BJ (cell line): ENCODE measurements at regions of chr1 and their contacts with region 1.

Region 1: GRCh38 chr1:180252638-180253536 is 22.8 kb downstream of the LHX4 start:
- DNase-seq: no peak
- H3K4me3 ChIP-seq: no peak overlapping the region
- H3K27me3 ChIP-seq: no peaks in the 10 kb centered on the region; the same call in 1 of the 2 replicates
- CTCF ChIP-seq: peak; percentile 88

Region 2: DNA sequence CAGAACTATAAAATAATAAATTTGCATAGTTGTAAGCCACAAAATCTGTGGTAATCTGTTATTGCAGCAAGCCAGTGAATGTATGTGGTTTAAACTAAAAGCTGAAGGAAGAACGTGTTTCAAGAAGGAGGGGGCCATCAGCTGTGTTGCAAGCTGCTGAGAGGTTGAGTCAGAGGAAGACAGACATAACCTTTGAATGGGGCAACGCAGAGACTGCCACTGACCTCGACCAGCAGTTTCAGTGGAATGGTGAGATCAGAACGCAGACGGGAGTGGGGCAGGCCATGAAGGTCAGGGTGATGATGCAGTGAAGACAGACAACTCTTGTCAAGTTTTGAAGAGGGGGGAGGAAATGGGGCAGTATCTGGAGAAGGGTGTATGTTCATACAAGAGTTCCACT is 121.4 kb before region 1 on chr1:
- CTCF ChIA-PET with region 1: no interaction called
- POLR2A ChIA-PET with region 1: no interaction called
- DNase-seq: peak; percentile 52
- H3K4me3 ChIP-seq: no peak overlapping the region
- H3K27me3 ChIP-seq: no peaks in the 10 kb centered on the region
- CTCF ChIP-seq: no peak

Region 3: DNA sequence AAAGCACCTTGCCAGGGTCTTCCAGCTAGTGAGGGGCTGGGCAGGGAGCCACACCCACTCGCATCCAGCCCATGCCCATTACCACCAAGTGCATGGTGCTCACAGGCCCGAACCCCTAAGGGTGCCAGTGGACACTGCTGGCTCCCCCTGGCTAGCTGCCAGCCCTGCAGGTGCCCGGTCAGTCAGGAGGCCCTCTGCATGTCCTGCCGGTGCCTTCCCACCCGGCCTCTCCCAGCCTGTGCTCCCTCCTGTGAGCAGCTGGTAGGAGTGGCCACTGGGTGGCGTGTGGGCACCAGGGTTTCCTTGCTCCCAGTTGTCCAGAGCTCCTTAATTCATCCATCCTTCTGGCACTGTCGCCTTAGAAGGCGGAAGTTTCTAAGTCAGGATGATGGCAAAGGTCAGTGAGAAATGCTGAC is 64.8 kb before region 1 on chr1:
- CTCF ChIA-PET with region 1: interaction called, 11 read pairs
- POLR2A ChIA-PET with region 1: no interaction called
- DNase-seq: no peak
- H3K4me3 ChIP-seq: no peak overlapping the region
- H3K27me3 ChIP-seq: no peaks in the 10 kb centered on the region
- CTCF ChIP-seq: peak; percentile 85

Region 4: GRCh38 chr1:180241716-180242526 is 11.0 kb before region 1 on chr1:
- CTCF ChIA-PET with region 1: interaction called, 10 read pairs
- POLR2A ChIA-PET with region 1: no interaction called
- DNase-seq: no peak
- H3K4me3 ChIP-seq: no peak overlapping the region
- H3K27me3 ChIP-seq: peaks cover 24% of the 10 kb centered on the region
- CTCF ChIP-seq: no peak

Region 5: GRCh38 chr1:180269761-180270527 is 17.1 kb after region 1 on chr1:
- CTCF ChIA-PET with region 1: interaction called, 11 read pairs
- POLR2A ChIA-PET with region 1: no interaction called
- DNase-seq: no peak
- H3K4me3 ChIP-seq: no peak overlapping the region
- H3K27me3 ChIP-seq: no peaks in the 10 kb centered on the region
- CTCF ChIP-seq: 0 out of 2 replicates have a peak, but pooled peaks have one; percentile 17

Region 6: DNA sequence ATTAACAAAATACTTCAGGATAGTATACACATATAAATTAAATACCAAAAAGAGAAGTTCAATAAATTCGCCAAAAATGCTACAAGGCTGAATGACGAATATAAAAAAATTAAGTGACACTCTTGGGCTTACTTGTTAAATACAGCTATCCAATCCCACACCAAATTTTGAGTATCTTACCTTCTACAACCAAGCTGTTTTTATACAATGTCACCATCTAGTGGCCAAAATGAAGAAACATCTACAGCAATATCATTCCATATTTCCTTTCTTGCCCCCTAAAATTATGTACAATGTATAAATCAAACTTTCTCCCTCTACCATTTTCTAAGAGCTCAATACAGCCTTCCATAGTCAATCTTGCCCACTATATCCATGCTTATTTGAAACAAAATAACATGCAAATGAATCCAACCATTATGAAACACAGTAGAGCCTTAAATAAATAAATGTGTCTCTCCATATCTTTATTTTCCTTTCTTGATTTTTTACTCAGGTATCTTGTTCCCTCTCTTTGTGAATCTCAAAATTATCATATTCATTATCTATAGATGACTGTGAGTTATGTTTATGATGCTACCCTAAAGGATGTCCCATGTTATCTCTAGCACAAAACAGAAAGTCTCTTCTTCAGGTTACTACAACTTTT is 163.2 kb after region 1 on chr1:
- CTCF ChIA-PET with region 1: interaction called, 24 read pairs
- POLR2A ChIA-PET with region 1: no interaction called
- DNase-seq: no peak
- H3K4me3 ChIP-seq: no peak overlapping the region
- H3K27me3 ChIP-seq: no peaks in the 10 kb centered on the region
- CTCF ChIP-seq: peak; percentile 63

Region 7: DNA sequence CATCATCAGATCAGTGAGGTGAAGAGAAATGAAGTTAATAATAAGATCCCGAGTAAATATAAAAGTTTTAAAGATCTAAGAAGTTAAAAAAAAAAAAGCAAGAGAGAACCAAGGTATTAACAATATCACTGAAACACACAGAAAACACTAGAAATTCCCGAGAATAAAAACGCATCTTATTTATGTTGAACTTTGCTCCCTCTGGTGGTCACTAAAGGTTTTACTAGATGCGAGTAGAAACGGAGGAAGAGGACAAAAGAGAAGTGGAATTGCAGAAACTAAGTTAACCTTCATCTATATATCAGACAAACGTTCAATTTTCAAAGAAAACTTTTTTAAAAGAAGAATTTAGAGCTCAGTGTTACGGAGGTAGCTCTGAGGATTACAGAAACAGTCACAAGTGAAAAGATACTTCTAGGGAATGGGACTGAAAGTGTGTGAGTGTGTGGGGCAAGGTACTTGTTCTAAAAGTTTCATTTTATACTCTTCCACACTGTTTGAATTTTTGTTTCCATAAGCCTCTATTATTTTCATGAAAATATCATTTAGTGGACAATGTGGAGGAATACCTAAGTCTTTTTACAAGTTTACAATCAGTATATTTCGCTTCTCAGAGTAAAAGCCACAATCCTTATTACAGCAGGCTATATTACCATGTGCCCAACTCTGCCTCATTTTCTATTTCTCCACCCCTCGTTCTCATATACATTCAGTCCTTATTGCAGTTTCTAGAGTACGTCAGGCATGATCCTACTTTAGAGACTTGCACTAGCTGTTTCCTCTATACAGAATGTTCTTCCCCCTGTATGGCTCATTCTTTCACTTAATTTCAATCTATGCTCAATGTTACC is 229.8 kb after region 1 on chr1:
- CTCF ChIA-PET with region 1: interaction called, 88 read pairs
- POLR2A ChIA-PET with region 1: no interaction called
- DNase-seq: no peak
- H3K4me3 ChIP-seq: no peak overlapping the region
- H3K27me3 ChIP-seq: no peaks in the 10 kb centered on the region
- CTCF ChIP-seq: peak; percentile 72